ENCODE measurements at regions of chrX and their contacts with region 1.

Region 1: GRCh38 chrX:118847676-118848075 is 24.1 kb downstream of the ZCCHC12 start:
- DNase-seq: peak; percentile 34
- ATAC-seq: no peak
- H3K4me3 ChIP-seq: no peak overlapping the region
- H3K27ac ChIP-seq: no peak overlapping the region
- H3K4me1 ChIP-seq: no peaks in the 10 kb centered on the region
- H3K27me3 ChIP-seq: no peaks in the 10 kb centered on the region
- CTCF ChIP-seq: peak; percentile 60
- EP300 ChIP-seq: no peak
- POLR2A ChIP-seq: no peak
- RAD21 ChIP-seq: no peak

Region 2: GRCh38 chrX:119004920-119005524 is 157.3 kb after region 1 on chrX:
- CTCF ChIA-PET with region 1: interaction called, 10 read pairs
- POLR2A ChIA-PET with region 1: no interaction called
- in situ Hi-C with region 1: no loop called
- intact Hi-C with region 1: loop called (anchors 1 kb)
- DNase-seq: peak; percentile 12
- ATAC-seq: peak; percentile 93
- H3K4me3 ChIP-seq: no peak overlapping the region
- H3K27ac ChIP-seq: no peak overlapping the region
- H3K4me1 ChIP-seq: no peaks in the 10 kb centered on the region
- H3K27me3 ChIP-seq: no peaks in the 10 kb centered on the region
- CTCF ChIP-seq: peak; percentile 82
- EP300 ChIP-seq: no peak
- POLR2A ChIP-seq: no peak
- RAD21 ChIP-seq: 0 out of 2 replicates have a peak, but pooled peaks have one; percentile 24

Region 3: GRCh38 chrX:119067023-119067739 is 219.5 kb after region 1 on chrX:
- CTCF ChIA-PET with region 1: interaction called, 12 read pairs
- POLR2A ChIA-PET with region 1: no interaction called
- in situ Hi-C with region 1: loop called (anchors 10 kb)
- intact Hi-C with region 1: loop called (anchors 1 kb)
- DNase-seq: peak; percentile 4
- ATAC-seq: peak; percentile 70
- H3K4me3 ChIP-seq: no peak overlapping the region
- H3K27ac ChIP-seq: no peak overlapping the region
- H3K4me1 ChIP-seq: no peaks in the 10 kb centered on the region
- H3K27me3 ChIP-seq: no peaks in the 10 kb centered on the region
- CTCF ChIP-seq: peak; percentile 63
- EP300 ChIP-seq: no peak
- POLR2A ChIP-seq: no peak
- RAD21 ChIP-seq: peak; percentile 29; the same call in 1 of the 2 replicates

Measured in HepG2 (cell line).